Activated CD4-positive, alpha-beta T cell treated with anti-CD3 and anti-CD28 coated beads for 36 hours (primary cell): ENCODE measurements at regions of chr9 and their contacts with region 1.

Region 1: GRCh38 chr9:99807276-99807852 is 14.3 kb upstream of the NR4A3 start:
- DNase-seq: peak; percentile 76
- ATAC-seq: no peak
- H3K4me3 Mint-ChIP-seq: no peak overlapping the region
- H3K27ac Mint-ChIP-seq: no peak overlapping the region
- H3K4me1 Mint-ChIP-seq: peaks cover 32% of the 10 kb centered on the region
- H3K27me3 Mint-ChIP-seq: peaks cover 4% of the 10 kb centered on the region

Region 2: DNA sequence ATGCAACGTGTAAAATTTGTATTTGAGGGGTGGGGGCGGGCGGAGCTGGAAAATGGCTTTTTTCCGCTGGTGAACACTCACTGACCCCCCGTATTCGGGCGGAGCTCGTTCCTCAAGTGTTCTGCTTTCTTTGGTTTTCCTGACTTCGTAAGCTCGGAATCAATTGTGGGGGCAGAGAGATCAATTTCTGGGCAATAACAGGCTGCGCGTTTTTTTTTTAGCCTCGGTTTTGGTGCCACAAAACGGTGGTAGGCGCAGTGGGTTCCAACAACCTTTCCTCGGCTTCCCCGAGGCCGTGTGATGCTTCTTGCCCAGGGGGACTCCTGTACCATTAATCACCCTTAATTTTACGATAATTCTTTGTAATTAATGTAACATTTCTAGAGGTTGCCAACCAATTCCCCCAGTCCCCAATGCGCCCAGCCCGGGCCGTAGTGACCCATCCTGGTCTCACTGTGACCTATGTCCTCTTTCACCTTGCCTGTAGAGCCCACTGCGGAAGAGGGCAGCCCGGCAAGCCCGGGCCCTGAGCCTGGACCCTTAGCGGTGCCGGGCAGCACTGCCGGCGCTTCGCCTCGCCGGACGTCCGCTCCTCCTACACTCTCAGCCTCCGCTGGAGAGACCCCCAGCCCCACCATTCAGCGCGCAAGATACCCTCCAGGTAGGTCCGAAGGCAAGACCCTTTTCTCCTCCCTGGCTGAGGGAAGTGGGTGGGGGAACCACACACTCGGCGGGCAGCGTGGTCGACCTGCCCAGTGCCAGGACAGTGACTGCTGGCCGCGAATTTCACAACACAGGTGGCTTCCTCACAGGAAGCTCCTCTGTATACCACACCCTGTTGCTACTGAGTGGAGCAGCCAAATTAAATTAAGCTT is 18.0 kb after region 1 on chr9:
- CTCF ChIA-PET with region 1: interaction called, 16 read pairs
- POLR2A ChIA-PET with region 1: no interaction called
- intact Hi-C with region 1: loop called in 1 of 2 experiments (anchors 1 kb)
- DNase-seq: no peak
- ATAC-seq: no peak
- H3K4me3 Mint-ChIP-seq: peak overlapping the region; percentile 88
- H3K27ac Mint-ChIP-seq: peak overlapping the region; percentile 0
- H3K4me1 Mint-ChIP-seq: peaks cover 50% of the 10 kb centered on the region
- H3K27me3 Mint-ChIP-seq: peaks cover 20% of the 10 kb centered on the region

Region 3: DNA sequence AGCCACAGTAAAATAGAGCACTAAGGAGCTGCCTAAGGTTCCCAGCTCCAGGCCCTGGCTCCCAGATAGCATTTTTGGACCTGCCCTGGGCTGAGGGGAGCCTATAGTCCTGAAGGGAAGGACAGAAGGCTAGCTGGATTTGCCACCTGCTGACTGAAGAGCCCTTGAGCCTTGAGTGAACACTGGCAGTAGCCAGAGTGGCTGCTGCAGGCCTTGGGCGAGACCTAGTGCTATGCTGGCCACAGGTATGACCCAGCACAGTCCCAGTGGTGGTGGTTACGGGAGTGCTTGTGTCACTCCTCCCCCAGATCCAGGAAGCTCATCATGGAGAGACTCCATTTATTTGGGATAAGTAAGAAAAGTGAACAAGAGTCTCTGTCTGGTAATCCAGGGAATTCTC is 88.8 kb after region 1 on chr9:
- CTCF ChIA-PET with region 1: no interaction called
- POLR2A ChIA-PET with region 1: no interaction called
- intact Hi-C with region 1: no loop called
- DNase-seq: no peak
- ATAC-seq: no peak
- H3K4me3 Mint-ChIP-seq: no peak overlapping the region
- H3K27ac Mint-ChIP-seq: no peak overlapping the region
- H3K4me1 Mint-ChIP-seq: no peaks in the 10 kb centered on the region
- H3K27me3 Mint-ChIP-seq: peaks cover 16% of the 10 kb centered on the region

Region 4: GRCh38 chr9:99906403-99907207 is 99.2 kb after region 1 on chr9 and contains the start of gene STX17:
- CTCF ChIA-PET with region 1: interaction called, 7 read pairs
- POLR2A ChIA-PET with region 1: no interaction called
- intact Hi-C with region 1: loop called in 1 of 2 experiments (anchors 2 kb)
- DNase-seq: peak; percentile 85
- ATAC-seq: peak; percentile 92
- H3K4me3 Mint-ChIP-seq: peak within 1 kb of the TSS; percentile 97
- H3K27ac Mint-ChIP-seq: peak within 1 kb of the TSS; percentile 96
- H3K4me1 Mint-ChIP-seq: peaks cover 26% of the 10 kb centered on the region
- H3K27me3 Mint-ChIP-seq: peaks cover 2% of the 10 kb centered on the region
- total RNA-seq, gene STX17: 32.8 to 35.2 TPM

Region 5: GRCh38 chr9:99954819-99955218 is 147.5 kb after region 1 on chr9:
- CTCF ChIA-PET with region 1: no interaction called
- POLR2A ChIA-PET with region 1: no interaction called
- intact Hi-C with region 1: loop called in 1 of 2 experiments (anchors 1 kb)
- DNase-seq: no peak
- ATAC-seq: peak; percentile 91
- H3K4me3 Mint-ChIP-seq: no peak overlapping the region
- H3K27ac Mint-ChIP-seq: peak overlapping the region; percentile 47
- H3K4me1 Mint-ChIP-seq: peaks cover 28% of the 10 kb centered on the region
- H3K27me3 Mint-ChIP-seq: no peaks in the 10 kb centered on the region

Region 6: GRCh38 chr9:100011062-100011681 is 203.8 kb after region 1 on chr9:
- CTCF ChIA-PET with region 1: interaction called, 4 read pairs
- POLR2A ChIA-PET with region 1: no interaction called
- intact Hi-C with region 1: loop called (anchors 1 kb)
- DNase-seq: peak; percentile 64
- ATAC-seq: peak; percentile 53
- H3K4me3 Mint-ChIP-seq: no peak overlapping the region
- H3K27ac Mint-ChIP-seq: no peak overlapping the region
- H3K4me1 Mint-ChIP-seq: no peaks in the 10 kb centered on the region
- H3K27me3 Mint-ChIP-seq: no peaks in the 10 kb centered on the region

Region 7: GRCh38 chr9:100222674-100223073 is 415.3 kb after region 1 on chr9:
- CTCF ChIA-PET with region 1: no interaction called
- POLR2A ChIA-PET with region 1: no interaction called
- intact Hi-C with region 1: loop called in 1 of 2 experiments (anchors 5 kb)
- DNase-seq: no peak
- ATAC-seq: no peak
- H3K4me3 Mint-ChIP-seq: no peak overlapping the region
- H3K27ac Mint-ChIP-seq: no peak overlapping the region
- H3K4me1 Mint-ChIP-seq: peaks cover 3% of the 10 kb centered on the region
- H3K27me3 Mint-ChIP-seq: no peaks in the 10 kb centered on the region